MCF 10A (cell line): ENCODE measurements at regions of chr11 and their contacts with region 1.

Region 1: DNA sequence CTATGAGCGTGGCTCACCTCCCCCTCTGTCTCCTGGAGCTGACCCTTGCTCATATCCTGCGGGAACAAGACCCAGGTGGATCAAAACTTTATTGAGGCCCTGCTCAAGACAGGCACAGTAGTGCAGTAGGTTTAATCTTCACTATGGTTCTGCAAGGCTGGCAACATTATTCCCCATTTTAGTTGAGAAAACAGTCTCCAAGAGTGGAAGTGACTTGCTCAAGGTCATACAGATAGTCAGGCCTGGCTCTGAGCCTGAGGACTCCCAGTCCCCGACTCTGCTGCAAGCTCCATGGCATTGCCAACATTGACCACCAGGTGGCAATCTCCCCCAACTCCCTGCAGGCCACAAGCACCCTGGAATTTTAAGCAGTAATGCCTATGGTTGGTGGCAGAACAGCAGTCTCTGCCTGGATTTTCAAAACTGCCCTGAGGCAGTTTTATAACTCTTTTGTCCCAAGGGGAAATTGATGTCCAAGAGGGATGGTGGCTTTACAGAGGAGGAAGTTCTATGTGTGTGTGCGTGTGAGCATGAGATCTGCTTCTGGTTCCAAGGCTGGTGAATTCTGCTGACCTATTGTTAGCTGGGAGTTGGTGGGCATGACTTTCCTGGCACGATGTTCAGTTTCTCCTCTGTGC is 34.1 kb downstream of the NEU3 start:
- DNase-seq: peak; percentile 76
- H3K4me3 Mint-ChIP-seq: no peak overlapping the region
- H3K27ac Mint-ChIP-seq: no peak overlapping the region
- H3K4me1 Mint-ChIP-seq: no peaks in the 10 kb centered on the region
- H3K27me3 Mint-ChIP-seq: peaks cover 2% of the 10 kb centered on the region
- CTCF ChIP-seq: peak; percentile 97

Region 2: GRCh38 chr11:74870485-74870884 is 152.4 kb before region 1 on chr11:
- CTCF ChIA-PET with region 1: no interaction called
- POLR2A ChIA-PET with region 1: no interaction called
- intact Hi-C with region 1: no loop called
- DNase-seq: peak; percentile 46
- H3K4me3 Mint-ChIP-seq: no peak overlapping the region
- H3K27ac Mint-ChIP-seq: no peak overlapping the region
- H3K4me1 Mint-ChIP-seq: no peaks in the 10 kb centered on the region
- H3K27me3 Mint-ChIP-seq: no peaks in the 10 kb centered on the region
- CTCF ChIP-seq: peak; percentile 21

Region 3: DNA sequence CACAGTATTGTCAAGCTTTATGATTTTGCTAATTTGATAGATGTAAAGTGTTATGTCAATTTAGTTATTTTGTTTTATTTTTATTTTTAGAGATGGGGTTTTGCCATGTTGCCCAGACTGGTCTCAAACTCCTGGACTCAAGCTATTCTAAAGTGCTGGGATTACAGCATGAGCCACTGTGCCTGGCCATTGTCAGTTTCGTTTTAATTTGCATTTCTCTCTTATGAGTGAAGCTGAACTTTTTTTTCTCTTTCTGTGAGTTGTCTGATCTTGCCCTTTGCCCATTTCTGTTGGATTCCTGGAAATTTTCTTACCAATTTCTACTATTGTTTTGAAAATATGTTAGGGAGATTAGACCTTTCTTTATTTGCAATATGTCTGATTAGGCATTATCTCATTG is 18.7 kb before region 1 on chr11:
- CTCF ChIA-PET with region 1: interaction called, 12 read pairs
- POLR2A ChIA-PET with region 1: no interaction called
- intact Hi-C with region 1: no loop called
- DNase-seq: no peak
- H3K4me3 Mint-ChIP-seq: no peak overlapping the region
- H3K27ac Mint-ChIP-seq: no peak overlapping the region
- H3K4me1 Mint-ChIP-seq: no peaks in the 10 kb centered on the region
- H3K27me3 Mint-ChIP-seq: no peaks in the 10 kb centered on the region
- CTCF ChIP-seq: no peak

Region 4: GRCh38 chr11:75147875-75148263 is 125.0 kb after region 1 on chr11:
- CTCF ChIA-PET with region 1: interaction called, 10 read pairs
- POLR2A ChIA-PET with region 1: no interaction called
- intact Hi-C with region 1: loop called (anchors 1 kb)
- DNase-seq: no peak
- H3K4me3 Mint-ChIP-seq: no peak overlapping the region
- H3K27ac Mint-ChIP-seq: no peak overlapping the region
- H3K4me1 Mint-ChIP-seq: peaks cover 19% of the 10 kb centered on the region
- H3K27me3 Mint-ChIP-seq: peaks cover 27% of the 10 kb centered on the region
- CTCF ChIP-seq: no peak

Region 5: DNA sequence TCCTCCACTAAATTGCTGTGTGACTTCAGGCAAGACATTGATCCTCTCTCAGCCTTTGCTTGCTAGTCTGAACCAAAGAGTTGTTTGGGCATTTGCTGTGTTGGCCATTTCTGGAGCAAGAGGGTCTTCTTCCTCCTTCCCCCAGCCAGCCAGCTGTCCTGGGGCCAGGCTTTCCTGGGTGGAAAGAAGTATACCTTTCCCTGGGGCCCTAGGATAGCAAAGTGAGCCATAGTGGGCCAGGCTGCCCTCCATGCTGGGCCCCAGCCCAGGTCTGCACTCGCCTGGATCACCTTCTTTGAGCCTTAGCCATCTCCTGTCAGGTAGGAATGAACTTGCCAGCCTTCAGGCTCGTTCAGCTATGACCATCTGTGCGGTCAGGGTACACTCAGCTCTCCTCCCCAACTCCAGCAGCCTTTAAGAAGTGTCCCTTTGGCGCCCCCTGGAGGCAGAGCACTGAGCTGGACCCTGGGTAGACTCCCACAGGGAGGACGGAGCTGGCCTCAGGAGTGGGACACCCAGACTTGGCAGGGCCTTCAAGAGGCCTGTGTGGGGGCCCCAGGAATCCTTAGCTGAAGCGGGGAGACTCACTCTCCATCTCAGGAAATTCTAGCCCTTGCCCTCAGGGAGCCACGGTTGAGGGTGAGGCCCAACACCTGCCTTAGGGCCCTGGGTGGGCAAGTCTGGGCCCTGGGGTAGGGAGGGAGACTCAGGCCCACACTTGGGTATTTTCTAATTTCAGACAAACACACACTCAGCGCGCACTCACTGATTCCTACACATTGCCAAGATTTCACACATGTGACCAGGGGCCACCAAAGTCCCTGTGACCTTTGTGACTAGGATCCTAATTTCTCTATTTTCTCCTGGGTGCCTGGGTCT is 182.0 kb after region 1 on chr11:
- CTCF ChIA-PET with region 1: interaction called, 37 read pairs
- POLR2A ChIA-PET with region 1: interaction called, 3 read pairs
- intact Hi-C with region 1: loop called (anchors 1 kb)
- DNase-seq: peak; percentile 83
- H3K4me3 Mint-ChIP-seq: no peak overlapping the region
- H3K27ac Mint-ChIP-seq: no peak overlapping the region
- H3K4me1 Mint-ChIP-seq: no peaks in the 10 kb centered on the region
- H3K27me3 Mint-ChIP-seq: peaks cover 32% of the 10 kb centered on the region
- CTCF ChIP-seq: peak; percentile 83

Region 6: GRCh38 chr11:75270896-75271418 is 248.1 kb after region 1 on chr11:
- CTCF ChIA-PET with region 1: interaction called, 6 read pairs
- POLR2A ChIA-PET with region 1: no interaction called
- intact Hi-C with region 1: loop called (anchors 1 kb)
- DNase-seq: peak; percentile 27
- H3K4me3 Mint-ChIP-seq: no peak overlapping the region
- H3K27ac Mint-ChIP-seq: no peak overlapping the region
- H3K4me1 Mint-ChIP-seq: no peaks in the 10 kb centered on the region
- H3K27me3 Mint-ChIP-seq: no peaks in the 10 kb centered on the region
- CTCF ChIP-seq: peak; percentile 55